Naive thymus-derived CD4-positive, alpha-beta T cell (primary cell): ENCODE measurements at regions of chr13 and their contacts with region 1.

Region 1: DNA sequence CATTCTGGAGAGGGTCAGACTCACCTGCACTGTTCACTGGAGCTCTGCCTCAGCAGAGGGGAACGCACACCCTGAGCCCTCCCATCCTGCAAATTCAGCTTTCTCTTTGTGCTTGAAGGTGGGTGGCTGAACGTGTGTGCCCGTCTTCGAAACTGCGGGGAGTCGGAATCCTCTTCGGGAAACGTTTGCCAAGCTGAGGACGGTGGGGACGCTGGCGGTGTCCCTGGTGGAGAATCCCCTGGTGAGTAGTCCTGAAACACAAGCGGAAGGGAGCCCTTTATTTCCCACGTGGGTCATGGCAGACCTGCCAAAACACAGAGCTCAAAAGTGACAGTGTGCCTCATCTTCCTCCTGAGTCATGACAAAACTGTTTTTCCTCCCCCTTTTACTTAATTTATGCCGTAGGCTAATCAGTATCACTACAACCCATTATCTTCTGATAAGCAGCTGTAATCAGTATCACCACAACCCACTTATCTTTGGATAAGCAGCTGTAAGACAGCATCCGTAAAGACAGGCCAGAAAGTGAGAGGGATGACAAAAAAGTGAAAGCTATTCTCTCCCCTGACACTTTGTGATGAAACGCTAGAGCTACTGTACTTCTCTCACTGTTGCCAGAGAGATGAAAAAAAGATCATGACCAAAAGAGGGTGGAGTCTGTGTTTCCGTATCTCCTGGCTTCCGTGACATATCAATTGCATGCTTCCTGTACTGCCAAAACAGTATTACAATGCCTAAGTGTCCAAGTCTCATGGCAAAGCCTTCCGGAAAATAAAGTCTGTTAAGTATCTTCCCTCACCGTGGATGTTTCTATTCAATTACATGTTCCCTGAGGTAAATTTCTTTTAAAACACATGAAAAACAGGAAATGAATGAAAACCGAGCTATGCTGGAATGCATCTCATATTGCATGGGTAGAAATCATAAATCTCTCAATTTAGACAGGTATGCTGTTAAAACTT is 155.5 kb downstream of the TBC1D4 start:
- DNase-seq: peak; percentile 19 to 88 (median 82)
- ATAC-seq: peak; percentile 94
- H3K4me3 ChIP-seq: peak overlapping the region; percentile 71
- H3K4me3 Mint-ChIP-seq: peak overlapping the region; percentile 90 to 97 (median 94)
- H3K27ac ChIP-seq: peak overlapping the region; percentile 87
- H3K27ac Mint-ChIP-seq: peak overlapping the region; percentile 92 to 99 (median 98)
- H3K4me1 ChIP-seq: peaks cover 4 to 24% of the 10 kb centered on the region in 2 donors
- H3K4me1 Mint-ChIP-seq: peaks cover 22 to 63% (median 55%) of the 10 kb centered on the region in 7 donors
- H3K27me3 ChIP-seq: no peaks in the 10 kb centered on the region
- H3K27me3 Mint-ChIP-seq: no peaks in the 10 kb centered on the region

Region 2: GRCh38 chr13:73715114-73715910 is 1611.1 kb before region 1 on chr13:
- CTCF ChIA-PET with region 1: no interaction called
- POLR2A ChIA-PET with region 1: no interaction called
- intact Hi-C with region 1: loop called (anchors 1 to 2 kb)
- DNase-seq: peak in 8 of 9 donors; percentile 53 to 85 (median 77)
- ATAC-seq: peak; percentile 90
- H3K4me3 ChIP-seq: peak overlapping the region; percentile 7
- H3K4me3 Mint-ChIP-seq: peak overlapping the region; percentile 72 to 86 (median 78)
- H3K27ac ChIP-seq: peak overlapping the region; percentile 67
- H3K27ac Mint-ChIP-seq: peak overlapping the region; percentile 87 to 99 (median 97)
- H3K4me1 ChIP-seq: peaks cover 34 to 43% of the 10 kb centered on the region in 2 donors
- H3K4me1 Mint-ChIP-seq: peaks cover 25 to 80% (median 58%) of the 10 kb centered on the region in 7 donors
- H3K27me3 ChIP-seq: no peaks in the 10 kb centered on the region
- H3K27me3 Mint-ChIP-seq: no peaks in the 10 kb centered on the region

Region 3: GRCh38 chr13:75294110-75294509 is 32.3 kb before region 1 on chr13:
- CTCF ChIA-PET with region 1: interaction called, 8 read pairs
- POLR2A ChIA-PET with region 1: no interaction called
- intact Hi-C with region 1: loop called in 1 of 2 experiments (anchors 5 kb)
- DNase-seq: no peak
- ATAC-seq: no peak
- H3K4me3 ChIP-seq: no peak overlapping the region
- H3K4me3 Mint-ChIP-seq: peak overlapping the region in 3 of 10 donors; percentile 15 to 53 (median 16)
- H3K27ac ChIP-seq: no peak overlapping the region
- H3K27ac Mint-ChIP-seq: peak overlapping the region in 6 of 9 donors; percentile 39 to 67 (median 49)
- H3K4me1 ChIP-seq: peaks cover 0 to 21% of the 10 kb centered on the region in 2 donors
- H3K4me1 Mint-ChIP-seq: peaks cover 10 to 55% (median 40%) of the 10 kb centered on the region in 7 donors
- H3K27me3 ChIP-seq: no peaks in the 10 kb centered on the region
- H3K27me3 Mint-ChIP-seq: no peaks in the 10 kb centered on the region

Region 4: GRCh38 chr13:75357576-75358289 is 31.3 kb after region 1 on chr13:
- CTCF ChIA-PET with region 1: interaction called, 4 read pairs
- POLR2A ChIA-PET with region 1: interaction called, 4 read pairs
- intact Hi-C with region 1: loop called (anchors 1 to 2 kb)
- DNase-seq: peak; percentile 7 to 76 (median 64)
- ATAC-seq: peak; percentile 97
- H3K4me3 ChIP-seq: no peak overlapping the region
- H3K4me3 Mint-ChIP-seq: no peak overlapping the region
- H3K27ac ChIP-seq: no peak overlapping the region
- H3K27ac Mint-ChIP-seq: peak overlapping the region in 1 of 9 donors; percentile 59
- H3K4me1 ChIP-seq: no peaks in the 10 kb centered on the region
- H3K4me1 Mint-ChIP-seq: peaks cover 0 to 7% (median 5%) of the 10 kb centered on the region in 7 donors
- H3K27me3 ChIP-seq: no peaks in the 10 kb centered on the region
- H3K27me3 Mint-ChIP-seq: peaks cover 0 to 4% (median 0%) of the 10 kb centered on the region in 5 donors

Region 5: DNA sequence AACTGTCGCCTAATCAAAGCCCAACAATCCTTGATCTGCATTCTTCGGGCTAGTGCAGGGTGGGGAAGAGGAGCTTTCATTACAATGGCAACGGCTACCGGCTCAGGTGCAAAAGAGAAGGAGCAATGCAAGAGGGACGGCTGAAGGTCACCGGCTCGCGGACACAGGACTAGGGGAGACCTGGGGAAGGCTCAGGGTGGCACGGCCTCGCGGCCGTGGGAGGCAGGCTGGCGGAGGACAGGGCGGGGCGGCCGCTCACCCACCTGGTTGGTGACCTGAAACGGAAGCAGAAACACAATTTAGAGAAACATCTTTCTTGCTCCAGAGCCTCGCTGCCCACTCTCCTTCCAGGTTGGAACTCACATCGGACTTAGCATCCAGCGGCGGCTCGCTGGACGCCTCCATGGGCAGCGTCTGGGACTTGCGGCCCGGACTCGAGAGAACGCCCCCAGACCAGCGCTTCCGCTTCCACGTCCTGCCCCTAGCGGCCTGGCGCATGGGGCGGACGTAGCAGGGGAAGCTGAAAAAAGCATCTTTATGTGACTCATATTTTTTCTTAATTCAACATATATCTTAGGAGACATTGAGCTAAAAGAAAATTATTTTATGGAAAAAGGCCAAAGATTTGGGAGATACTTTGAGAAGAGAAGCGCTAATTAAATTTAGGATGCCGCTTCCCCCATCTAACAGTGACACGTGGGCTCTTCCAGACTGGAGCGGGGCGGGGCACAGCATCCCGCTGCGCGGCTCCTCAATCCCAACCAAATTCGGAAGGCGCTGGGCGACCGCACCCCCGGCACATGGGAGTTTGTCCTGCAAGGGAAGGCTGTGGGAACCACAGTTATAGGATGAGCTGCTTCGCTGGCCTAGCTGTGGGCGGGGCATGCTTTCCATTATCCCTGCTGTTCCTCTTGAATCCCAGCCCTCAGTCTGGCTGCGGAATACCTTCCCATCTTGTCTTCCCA is 211.2 kb after region 1 on chr13 and contains the start of gene COMMD6:
- CTCF ChIA-PET with region 1: no interaction called
- POLR2A ChIA-PET with region 1: interaction called, 3 read pairs
- intact Hi-C with region 1: loop called (anchors 2 kb)
- DNase-seq: peak; percentile 46 to 77 (median 65)
- ATAC-seq: peak; percentile 93
- H3K4me3 ChIP-seq: peak within 1 kb of the TSS; percentile 96
- H3K4me3 Mint-ChIP-seq: peak within 1 kb of the TSS; percentile 88 to 100 (median 98)
- H3K27ac ChIP-seq: peak within 1 kb of the TSS; percentile 85
- H3K27ac Mint-ChIP-seq: peak within 1 kb of the TSS; percentile 83 to 98 (median 95)
- H3K4me1 ChIP-seq: peaks cover 12 to 26% of the 10 kb centered on the region in 2 donors
- H3K4me1 Mint-ChIP-seq: peaks cover 28 to 57% (median 45%) of the 10 kb centered on the region in 7 donors
- H3K27me3 ChIP-seq: no peaks in the 10 kb centered on the region
- H3K27me3 Mint-ChIP-seq: no peaks in the 10 kb centered on the region
- total RNA-seq, gene COMMD6: 133 to 241 (median 205) TPM

Region 6: GRCh38 chr13:75760131-75761021 is 433.9 kb after region 1 on chr13:
- CTCF ChIA-PET with region 1: no interaction called
- POLR2A ChIA-PET with region 1: interaction called, 7 read pairs
- intact Hi-C with region 1: loop called (anchors 2 to 5 kb)
- DNase-seq: peak in 7 of 9 donors; percentile 29 to 60 (median 46)
- ATAC-seq: peak; percentile 75
- H3K4me3 ChIP-seq: peak overlapping the region; percentile 65
- H3K4me3 Mint-ChIP-seq: peak overlapping the region; percentile 79 to 96 (median 92)
- H3K27ac ChIP-seq: peak overlapping the region; percentile 78
- H3K27ac Mint-ChIP-seq: peak overlapping the region; percentile 86 to 99 (median 96)
- H3K4me1 ChIP-seq: peaks cover 30 to 32% of the 10 kb centered on the region in 2 donors
- H3K4me1 Mint-ChIP-seq: peaks cover 37 to 72% (median 68%) of the 10 kb centered on the region in 7 donors
- H3K27me3 ChIP-seq: no peaks in the 10 kb centered on the region
- H3K27me3 Mint-ChIP-seq: no peaks in the 10 kb centered on the region